Left lung (tissue), 14 donors: ENCODE measurements at regions of chr9 and their contacts with region 1.

Region 1: DNA sequence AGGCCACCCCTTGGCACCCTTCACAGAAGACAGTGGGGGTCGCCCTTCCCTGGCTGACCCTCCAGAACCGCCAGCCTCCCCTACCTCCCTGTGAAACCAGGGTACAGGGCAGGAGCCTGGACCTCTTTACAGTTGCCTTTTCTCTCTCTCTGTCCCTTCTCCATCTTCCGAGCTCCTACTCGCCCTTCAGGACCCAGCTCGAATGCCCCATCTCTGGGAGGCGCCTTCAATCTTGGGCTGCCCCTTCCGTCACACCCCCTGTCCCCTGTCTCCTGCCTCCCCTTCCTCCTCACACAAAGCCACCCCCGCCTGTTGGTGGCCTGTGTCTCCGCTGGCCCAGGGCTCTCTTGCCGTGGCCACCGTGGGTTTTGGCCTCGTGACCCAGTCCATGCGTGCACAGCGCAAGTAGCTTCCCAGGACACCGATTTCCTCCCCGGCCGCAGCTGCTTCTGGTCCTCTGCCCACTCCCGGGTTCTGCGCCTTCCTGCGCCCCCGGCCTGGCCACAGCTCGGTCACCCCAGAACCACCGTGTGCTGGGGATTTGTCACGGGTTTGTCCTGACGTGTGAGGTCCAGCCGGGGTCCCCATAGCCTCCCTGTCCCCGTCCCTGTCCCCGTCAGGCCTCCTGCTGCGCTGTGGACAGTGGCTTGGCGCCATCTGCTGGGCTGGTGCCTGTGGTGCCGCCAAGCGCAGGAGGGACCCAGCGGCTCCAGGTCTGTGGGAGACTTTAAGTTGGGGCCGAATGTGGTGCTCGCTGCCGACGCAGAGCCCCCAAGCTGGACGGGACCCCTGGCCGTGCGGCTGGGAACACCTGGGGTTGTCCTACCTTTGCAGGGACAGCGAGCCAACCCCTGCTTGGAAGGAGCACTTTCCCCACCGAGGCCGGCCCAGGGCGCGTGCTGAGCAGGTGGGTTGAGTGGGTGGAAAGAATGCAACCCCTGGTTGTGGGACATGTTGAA is 4.0 kb upstream of the TMEM250 start:
- DNase-seq: peak; percentile 68 to 96 (median 72)
- ATAC-seq: peak; percentile 52
- H3K4me3 ChIP-seq: no peak overlapping the region
- H3K27ac ChIP-seq: no peak overlapping the region
- H3K4me1 ChIP-seq: peaks cover 10 to 24% of the 10 kb centered on the region in 2 donors
- H3K27me3 ChIP-seq: peaks cover 0 to 23% of the 10 kb centered on the region in 2 donors
- CTCF ChIP-seq: peak; percentile 94 to 99

Region 2: GRCh38 chr9:135864447-135865049 is 258.2 kb before region 1 on chr9:
- intact Hi-C with region 1: loop called in 1 of 2 experiments (anchors 10 kb)
- DNase-seq: peak in 2 of 4 donors; percentile 16 to 37
- ATAC-seq: peak; percentile 79
- H3K4me3 ChIP-seq: no peak overlapping the region
- H3K27ac ChIP-seq: no peak overlapping the region
- H3K4me1 ChIP-seq: peaks cover 0 to 10% of the 10 kb centered on the region in 2 donors
- H3K27me3 ChIP-seq: no peaks in the 10 kb centered on the region
- CTCF ChIP-seq: peak; percentile 85 to 89

Region 3: GRCh38 chr9:135971892-135972291 is 150.8 kb before region 1 on chr9:
- intact Hi-C with region 1: loop called (anchors 5 to 10 kb)
- DNase-seq: peak in 2 of 4 donors; percentile 60 to 79
- ATAC-seq: peak; percentile 88
- H3K4me3 ChIP-seq: no peak overlapping the region
- H3K27ac ChIP-seq: no peak overlapping the region
- H3K4me1 ChIP-seq: peaks cover 0 to 42% of the 10 kb centered on the region in 2 donors
- H3K27me3 ChIP-seq: peaks cover 0 to 3% of the 10 kb centered on the region in 2 donors
- CTCF ChIP-seq: no peak